ENCODE measurements at regions of chr7 and their contacts with region 1.

Region 1: DNA sequence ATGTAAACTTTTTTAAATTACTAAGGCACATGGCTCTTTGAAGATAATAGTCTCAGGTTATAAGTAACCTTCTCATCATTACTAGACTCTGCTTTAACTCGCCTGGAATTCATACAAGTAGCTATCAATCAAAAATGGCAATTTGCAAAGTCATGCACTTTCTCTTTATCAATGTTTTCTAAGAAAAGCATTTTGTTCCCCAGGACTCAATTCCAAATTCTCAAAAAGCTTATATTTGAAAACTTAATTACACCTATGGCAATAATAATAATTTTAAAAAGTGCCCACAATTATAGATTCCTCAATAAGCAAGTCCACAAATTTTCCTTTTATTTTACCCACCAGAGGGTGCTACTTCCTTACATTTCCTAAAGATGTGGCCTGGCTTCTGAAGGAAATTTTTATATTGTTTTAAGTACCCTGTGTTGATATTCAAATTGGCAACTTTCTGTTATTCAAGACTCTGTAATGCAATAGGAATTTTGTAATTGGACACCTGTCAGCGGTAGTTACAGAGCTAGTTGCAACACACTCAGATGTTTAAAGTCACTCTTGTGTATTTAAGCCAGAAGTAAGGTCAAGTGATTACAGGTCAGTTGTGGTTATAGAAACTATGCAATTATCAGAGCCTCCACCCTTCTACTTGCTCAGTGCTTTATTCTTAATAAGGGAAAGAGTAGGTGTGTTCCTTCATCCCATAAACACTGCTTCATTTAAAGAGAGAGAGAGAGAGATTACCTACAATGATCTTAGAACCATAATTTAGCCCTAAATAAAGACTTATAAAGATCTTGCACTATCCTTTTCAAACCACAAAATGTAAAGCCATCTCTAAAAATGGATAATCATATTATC is 47.1 kb upstream of the HYAL4 start:
- DNase-seq: no peak
- ATAC-seq: no peak
- H3K4me3 Mint-ChIP-seq: no peak overlapping the region
- H3K27ac Mint-ChIP-seq: no peak overlapping the region
- H3K4me1 Mint-ChIP-seq: no peaks in the 10 kb centered on the region
- H3K27me3 Mint-ChIP-seq: no peaks in the 10 kb centered on the region
- CTCF ChIP-seq: peak; percentile 87

Region 2: DNA sequence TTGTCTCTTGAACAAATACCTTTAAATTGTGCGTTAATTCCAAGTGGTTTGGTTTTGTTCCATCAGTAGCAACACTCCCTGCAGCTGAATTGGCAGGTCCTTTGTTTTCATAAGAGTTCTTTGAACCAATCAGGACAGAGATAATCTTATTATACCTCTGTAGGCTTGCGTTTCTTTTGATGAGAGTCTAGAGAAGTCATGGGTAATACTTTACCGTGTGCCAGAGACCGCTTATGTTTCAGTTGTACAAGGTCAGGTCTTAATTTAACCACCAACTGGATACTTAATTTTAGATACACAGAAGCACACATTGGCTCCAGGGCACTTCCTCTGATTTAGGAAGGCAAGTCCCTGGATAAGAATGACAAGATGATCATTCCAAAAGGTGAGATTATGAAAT is 196.4 kb before region 1 on chr7 and contains the start of gene ASB15:
- CTCF ChIA-PET with region 1: no interaction called
- POLR2A ChIA-PET with region 1: no interaction called
- intact Hi-C with region 1: no loop called
- DNase-seq: no peak
- ATAC-seq: no peak
- H3K4me3 Mint-ChIP-seq: no peak within 1 kb of the TSS
- H3K27ac Mint-ChIP-seq: no peak within 1 kb of the TSS
- H3K4me1 Mint-ChIP-seq: no peaks in the 10 kb centered on the region
- H3K27me3 Mint-ChIP-seq: peaks cover 10% of the 10 kb centered on the region
- CTCF ChIP-seq: no peak
- total RNA-seq, gene ASB15: not detected

Region 3: DNA sequence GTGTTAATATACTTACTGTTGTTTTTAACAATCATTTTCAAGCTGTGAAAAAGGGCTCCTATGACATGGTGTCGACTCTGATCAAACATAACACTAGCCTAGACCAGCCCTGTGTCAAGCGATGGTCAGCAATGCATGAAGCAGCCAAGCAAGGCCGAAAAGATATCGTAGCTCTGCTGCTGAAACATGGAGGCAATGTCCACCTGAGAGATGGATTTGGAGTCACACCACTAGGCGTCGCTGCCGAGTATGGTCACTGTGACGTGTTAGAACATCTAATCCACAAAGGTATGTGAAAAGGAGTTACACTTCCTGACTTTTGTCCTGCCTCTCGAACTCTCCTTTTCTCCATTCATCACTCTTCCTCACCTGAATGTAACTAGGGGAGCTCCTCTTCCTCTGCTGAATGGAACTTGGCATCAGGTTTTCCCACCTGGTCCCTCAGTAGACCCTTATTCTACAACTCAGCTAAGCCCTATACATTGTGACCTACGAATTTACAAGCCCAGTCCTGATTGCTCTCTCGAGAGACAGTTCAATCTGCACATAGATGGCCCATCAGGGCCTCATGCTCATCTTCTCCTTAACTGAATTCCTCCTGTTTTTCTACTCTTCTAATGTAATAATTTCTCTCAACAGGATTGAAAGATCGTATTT is 173.2 kb before region 1 on chr7:
- CTCF ChIA-PET with region 1: no interaction called
- POLR2A ChIA-PET with region 1: no interaction called
- intact Hi-C with region 1: no loop called
- DNase-seq: peak; percentile 87
- ATAC-seq: peak; percentile 86
- H3K4me3 Mint-ChIP-seq: no peak overlapping the region
- H3K27ac Mint-ChIP-seq: no peak overlapping the region
- H3K4me1 Mint-ChIP-seq: peaks cover 2% of the 10 kb centered on the region
- H3K27me3 Mint-ChIP-seq: peaks cover 9% of the 10 kb centered on the region
- CTCF ChIP-seq: peak; percentile 66

Region 4: GRCh38 chr7:123682690-123683089 is 115.2 kb before region 1 on chr7:
- CTCF ChIA-PET with region 1: interaction called, 17 read pairs
- POLR2A ChIA-PET with region 1: no interaction called
- intact Hi-C with region 1: no loop called
- DNase-seq: peak; percentile 17
- ATAC-seq: peak; percentile 45
- H3K4me3 Mint-ChIP-seq: no peak overlapping the region
- H3K27ac Mint-ChIP-seq: no peak overlapping the region
- H3K4me1 Mint-ChIP-seq: no peaks in the 10 kb centered on the region
- H3K27me3 Mint-ChIP-seq: no peaks in the 10 kb centered on the region
- CTCF ChIP-seq: peak; percentile 66

Region 5: DNA sequence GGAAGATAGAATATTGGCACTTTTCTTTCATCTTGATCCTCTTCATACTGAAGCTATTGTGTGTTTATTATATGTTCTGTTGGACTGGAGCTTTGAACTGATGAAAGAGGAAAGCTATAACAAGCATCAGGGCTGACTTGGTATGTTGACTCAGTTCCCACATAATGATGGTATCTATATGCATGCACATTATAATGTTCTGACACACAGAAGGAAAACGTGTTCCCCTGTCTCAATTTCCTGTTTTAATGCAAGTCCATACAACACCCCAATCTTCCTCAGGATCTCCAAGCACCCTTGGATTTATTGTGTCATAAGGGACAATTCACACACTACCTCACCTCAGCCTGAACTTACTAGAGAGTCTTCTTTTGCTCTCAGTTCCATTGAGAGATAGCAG is 40.8 kb before region 1 on chr7:
- CTCF ChIA-PET with region 1: no interaction called
- POLR2A ChIA-PET with region 1: no interaction called
- intact Hi-C with region 1: no loop called
- DNase-seq: no peak
- ATAC-seq: no peak
- H3K4me3 Mint-ChIP-seq: no peak overlapping the region
- H3K27ac Mint-ChIP-seq: no peak overlapping the region
- H3K4me1 Mint-ChIP-seq: peaks cover 13% of the 10 kb centered on the region
- H3K27me3 Mint-ChIP-seq: peaks cover 2% of the 10 kb centered on the region
- CTCF ChIP-seq: no peak

Region 6: DNA sequence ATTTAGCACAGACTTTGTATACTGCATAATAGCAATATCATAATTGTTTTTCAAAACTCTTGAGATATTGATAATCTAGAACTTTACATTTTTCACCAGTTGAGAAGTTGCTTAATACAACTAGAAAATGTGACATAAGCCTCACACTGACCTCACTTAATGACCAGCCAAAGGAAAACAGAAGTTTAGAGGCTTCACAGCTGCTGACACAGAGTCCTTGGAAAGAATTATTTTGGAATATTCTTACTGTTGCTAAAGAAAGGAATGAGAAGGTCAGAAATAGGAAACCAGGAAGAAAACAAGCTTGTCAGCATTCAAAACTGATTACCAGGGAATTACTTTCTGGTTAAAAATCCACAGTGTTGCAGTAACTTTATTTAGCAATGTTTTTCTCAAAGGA is 13.6 kb before region 1 on chr7:
- CTCF ChIA-PET with region 1: interaction called, 15 read pairs
- POLR2A ChIA-PET with region 1: no interaction called
- intact Hi-C with region 1: no loop called
- DNase-seq: no peak
- ATAC-seq: no peak
- H3K4me3 Mint-ChIP-seq: no peak overlapping the region
- H3K27ac Mint-ChIP-seq: no peak overlapping the region
- H3K4me1 Mint-ChIP-seq: no peaks in the 10 kb centered on the region
- H3K27me3 Mint-ChIP-seq: peaks cover 3% of the 10 kb centered on the region
- CTCF ChIP-seq: no peak

Region 7: GRCh38 chr7:123823898-123824753 is 26.2 kb after region 1 on chr7:
- CTCF ChIA-PET with region 1: interaction called, 10 read pairs
- POLR2A ChIA-PET with region 1: no interaction called
- intact Hi-C with region 1: no loop called
- DNase-seq: peak; percentile 84
- ATAC-seq: peak; percentile 94
- H3K4me3 Mint-ChIP-seq: peak overlapping the region; percentile 53
- H3K27ac Mint-ChIP-seq: peak overlapping the region; percentile 80
- H3K4me1 Mint-ChIP-seq: peaks cover 21% of the 10 kb centered on the region
- H3K27me3 Mint-ChIP-seq: peaks cover 19% of the 10 kb centered on the region
- CTCF ChIP-seq: no peak

Region 8: DNA sequence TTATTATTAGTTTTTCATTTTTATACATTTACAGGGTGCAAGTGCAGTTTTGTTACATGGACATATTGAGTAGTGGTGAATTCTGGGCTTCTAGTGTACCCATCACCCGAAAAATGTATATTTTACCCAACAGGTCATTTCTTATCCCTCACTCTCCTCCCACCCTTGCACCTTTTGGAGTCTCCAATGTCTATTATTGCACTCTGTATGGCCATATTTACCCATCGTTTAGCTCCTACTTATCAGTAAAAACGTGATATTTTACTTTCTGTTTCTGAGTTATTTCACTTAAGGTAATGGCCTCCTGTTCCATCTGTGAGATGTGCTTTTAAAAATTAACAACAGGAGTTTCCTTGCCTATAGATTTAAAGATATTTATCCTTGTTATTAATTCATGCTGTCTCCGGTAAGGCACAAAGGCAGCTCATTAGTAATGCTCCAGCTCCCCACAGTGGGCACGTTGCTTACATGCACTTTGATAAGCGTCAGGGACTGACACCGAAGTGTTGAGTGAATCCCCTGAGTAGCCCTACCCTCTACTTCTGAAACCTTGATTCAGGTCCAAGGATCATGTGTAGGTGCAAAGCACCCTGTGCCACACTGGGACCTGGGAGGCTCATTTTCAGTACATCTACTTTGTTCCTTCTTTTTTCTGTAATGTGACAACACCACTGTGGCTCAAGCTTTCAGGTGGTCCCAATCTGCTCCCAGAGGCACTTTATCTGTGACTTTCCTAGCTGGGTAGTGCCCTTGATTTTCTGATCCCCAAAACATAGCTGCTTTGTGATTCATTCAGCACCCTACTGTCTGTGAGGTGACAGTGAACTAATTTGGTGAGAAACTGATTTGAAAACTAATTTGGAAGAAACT is 74.3 kb after region 1 on chr7:
- CTCF ChIA-PET with region 1: interaction called, 118 read pairs
- POLR2A ChIA-PET with region 1: no interaction called
- intact Hi-C with region 1: loop called (anchors 2 kb)
- DNase-seq: peak; percentile 61
- ATAC-seq: peak; percentile 82
- H3K4me3 Mint-ChIP-seq: no peak overlapping the region
- H3K27ac Mint-ChIP-seq: no peak overlapping the region
- H3K4me1 Mint-ChIP-seq: no peaks in the 10 kb centered on the region
- H3K27me3 Mint-ChIP-seq: peaks cover 12% of the 10 kb centered on the region
- CTCF ChIP-seq: peak; percentile 66

Measured in activated CD8-positive, alpha-beta T cell treated with anti-CD3 and anti-CD28 coated beads for 36 hours (primary cell).